HCT116 (cell line): ENCODE measurements at regions of chr17 and their contacts with region 1.

Region 1: GRCh38 chr17:9768381-9768934 is 22.9 kb downstream of the DHRS7C start:
- DNase-seq: peak; percentile 34
- ATAC-seq: peak; percentile 73
- H3K4me3 ChIP-seq: no peak overlapping the region
- H3K27ac ChIP-seq: no peak overlapping the region
- H3K4me1 ChIP-seq: peaks cover 0 to 3% of the 10 kb centered on the region in 2 experiments; a peak in 1 of 4 replicates
- H3K27me3 ChIP-seq: peaks cover 13% of the 10 kb centered on the region; the same call in 1 of the 2 replicates
- CTCF ChIP-seq: peak; percentile 26 to 38 (median 33); a peak in 3 of 6 replicates
- POLR2A ChIP-seq: no peak
- RAD21 ChIP-seq: peak; percentile 51

Region 2: DNA sequence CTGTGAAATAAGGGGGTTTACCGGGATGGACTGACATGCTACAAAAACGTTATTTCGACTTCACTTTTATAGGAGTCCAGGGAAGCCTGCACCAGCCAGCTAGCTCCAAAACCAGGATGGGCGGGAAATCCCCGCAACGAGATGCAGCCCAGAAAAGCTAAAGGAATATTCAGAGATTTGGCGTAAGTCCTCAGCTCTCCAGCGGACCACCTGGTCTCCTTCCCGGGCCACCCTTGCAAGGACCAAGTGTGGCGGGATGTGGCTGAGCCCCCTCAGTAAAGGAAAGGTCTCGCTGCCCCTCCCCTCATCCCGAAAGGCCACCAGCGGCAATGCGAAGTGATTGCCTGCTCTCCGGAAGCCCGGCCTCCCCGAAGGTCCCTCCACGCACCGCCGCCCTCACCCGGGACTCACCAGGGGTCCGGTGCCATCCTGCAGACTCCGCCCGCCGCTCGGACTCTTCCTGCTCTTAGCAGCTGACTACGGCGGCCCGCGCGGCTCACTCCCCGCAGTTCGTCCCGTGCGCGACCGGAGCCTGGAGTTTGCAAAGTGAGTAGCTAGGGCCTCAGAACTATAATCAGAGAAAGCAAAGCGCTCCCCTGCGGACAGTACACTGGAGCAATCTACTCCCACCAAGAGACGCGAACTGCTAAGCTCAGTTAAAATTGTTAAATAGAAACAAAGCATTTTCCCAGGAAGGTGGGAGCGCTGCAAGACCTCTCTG is 192.9 kb before region 1 on chr17 and contains the start of gene STX8:
- CTCF ChIA-PET with region 1: interaction called, 21 read pairs
- POLR2A ChIA-PET with region 1: no interaction called
- RAD21 ChIA-PET with region 1: no interaction called
- intact Hi-C with region 1: loop called (anchors 2 kb)
- DNase-seq: peak; percentile 74
- ATAC-seq: peak; percentile 87
- H3K4me3 ChIP-seq: peak within 1 kb of the TSS; percentile 78 to 97
- H3K27ac ChIP-seq: peak within 1 kb of the TSS; percentile 51
- H3K4me1 ChIP-seq: peaks cover 5 to 15% of the 10 kb centered on the region in 2 experiments; a peak in 3 of 4 replicates
- H3K27me3 ChIP-seq: no peaks in the 10 kb centered on the region
- CTCF ChIP-seq: no peak
- POLR2A ChIP-seq: no peak
- RAD21 ChIP-seq: no peak
- total RNA-seq, gene STX8: 38.8 TPM

Region 3: GRCh38 chr17:9729034-9729650 is 39.3 kb before region 1 on chr17:
- CTCF ChIA-PET with region 1: interaction called, 11 read pairs
- POLR2A ChIA-PET with region 1: no interaction called
- RAD21 ChIA-PET with region 1: no interaction called
- intact Hi-C with region 1: loop called (anchors 1 kb)
- DNase-seq: peak; percentile 23
- ATAC-seq: peak; percentile 58; the same call in 1 of the 2 replicates
- H3K4me3 ChIP-seq: no peak overlapping the region
- H3K27ac ChIP-seq: no peak overlapping the region
- H3K4me1 ChIP-seq: peaks cover 3 to 9% of the 10 kb centered on the region in 2 experiments; a peak in 2 of 4 replicates
- H3K27me3 ChIP-seq: no peaks in the 10 kb centered on the region
- CTCF ChIP-seq: peak; percentile 77 to 97 (median 95)
- POLR2A ChIP-seq: no peak
- RAD21 ChIP-seq: peak; percentile 85

Region 4: DNA sequence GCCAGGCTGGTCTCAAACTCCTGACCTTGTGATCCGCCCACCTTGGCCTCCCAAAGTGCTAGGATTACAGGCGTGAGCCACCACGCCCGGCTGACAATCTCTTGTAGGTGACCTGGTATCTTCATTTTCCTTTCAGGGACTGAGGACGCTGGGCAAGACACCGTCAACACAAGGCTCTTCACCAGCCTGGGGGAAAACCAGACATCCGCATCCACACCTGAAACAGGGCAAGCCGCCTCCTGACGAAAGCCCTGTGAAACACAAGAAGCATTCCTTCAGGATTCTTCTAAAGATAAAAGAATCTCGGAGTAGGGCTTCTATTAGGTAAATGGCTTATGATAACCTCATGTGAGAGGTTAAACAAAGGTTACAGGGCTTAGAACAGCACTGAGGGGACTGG is 25.4 kb before region 1 on chr17:
- CTCF ChIA-PET with region 1: interaction called, 12 read pairs
- POLR2A ChIA-PET with region 1: no interaction called
- RAD21 ChIA-PET with region 1: no interaction called
- intact Hi-C with region 1: no loop called
- DNase-seq: no peak
- ATAC-seq: no peak
- H3K4me3 ChIP-seq: no peak overlapping the region
- H3K27ac ChIP-seq: no peak overlapping the region
- H3K4me1 ChIP-seq: no peaks in the 10 kb centered on the region
- H3K27me3 ChIP-seq: no peaks in the 10 kb centered on the region
- CTCF ChIP-seq: no peak
- POLR2A ChIP-seq: no peak
- RAD21 ChIP-seq: no peak

Region 5: GRCh38 chr17:9755083-9755482 is 13.4 kb before region 1 on chr17:
- CTCF ChIA-PET with region 1: interaction called, 30 read pairs
- POLR2A ChIA-PET with region 1: no interaction called
- RAD21 ChIA-PET with region 1: no interaction called
- intact Hi-C with region 1: no loop called
- DNase-seq: no peak
- ATAC-seq: no peak
- H3K4me3 ChIP-seq: no peak overlapping the region
- H3K27ac ChIP-seq: no peak overlapping the region
- H3K4me1 ChIP-seq: no peaks in the 10 kb centered on the region
- H3K27me3 ChIP-seq: peaks cover 3% of the 10 kb centered on the region; the same call in 1 of the 2 replicates
- CTCF ChIP-seq: no peak
- POLR2A ChIP-seq: no peak
- RAD21 ChIP-seq: peak; percentile 8; the same call in 1 of the 2 replicates

Region 6: DNA sequence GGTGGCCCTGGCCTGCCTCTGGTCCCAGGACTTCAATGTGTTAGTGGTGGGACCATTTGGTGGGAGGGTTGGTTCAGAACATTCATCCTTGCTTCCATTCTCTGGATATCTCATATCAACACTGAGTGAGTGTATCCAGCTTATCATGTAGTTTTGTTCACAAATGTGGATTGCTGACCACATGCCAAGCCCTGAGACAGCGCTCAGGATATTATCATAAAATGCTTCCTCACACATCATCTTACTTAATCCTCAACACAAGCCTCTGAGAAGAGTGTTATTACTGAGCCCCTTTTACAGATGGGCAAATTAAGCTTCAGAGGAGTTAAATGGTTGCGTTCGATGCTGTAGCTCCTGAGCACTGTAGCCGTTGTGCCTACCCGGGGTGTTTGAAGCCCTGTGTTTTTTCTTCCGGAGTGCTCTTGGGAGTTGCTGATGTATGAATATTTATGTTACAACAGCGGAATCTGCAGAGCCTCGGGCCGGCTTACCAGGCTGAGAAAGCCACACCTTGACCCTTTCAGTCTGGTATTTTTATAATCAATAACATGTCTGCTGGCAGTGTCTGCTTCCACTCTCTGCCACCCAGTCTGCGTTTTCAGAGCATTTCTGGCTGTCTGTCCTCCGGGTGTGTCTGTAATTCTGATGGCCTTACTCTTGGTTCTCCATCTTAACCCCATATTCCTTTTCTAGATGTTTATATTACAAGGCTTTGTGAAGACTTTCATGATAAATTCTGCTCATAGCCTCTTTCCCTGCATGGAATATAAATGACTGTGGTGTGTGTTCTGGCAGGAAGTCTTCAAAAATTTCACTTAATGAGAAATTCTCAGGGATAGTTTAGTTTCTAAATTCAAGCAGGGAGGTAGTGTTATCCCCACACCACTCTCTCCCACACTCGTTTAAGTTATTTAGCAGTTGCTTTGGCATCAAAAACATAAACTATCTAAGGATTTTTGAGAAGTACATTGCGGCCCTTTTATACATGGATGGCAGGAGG is 60.1 kb after region 1 on chr17:
- CTCF ChIA-PET with region 1: no interaction called
- POLR2A ChIA-PET with region 1: no interaction called
- RAD21 ChIA-PET with region 1: no interaction called
- intact Hi-C with region 1: no loop called
- DNase-seq: no peak
- ATAC-seq: no peak
- H3K4me3 ChIP-seq: no peak overlapping the region
- H3K27ac ChIP-seq: no peak overlapping the region
- H3K4me1 ChIP-seq: no peaks in the 10 kb centered on the region
- H3K27me3 ChIP-seq: no peaks in the 10 kb centered on the region
- CTCF ChIP-seq: no peak
- POLR2A ChIP-seq: no peak
- RAD21 ChIP-seq: no peak